ENCODE measurements at regions of chr5 and their contacts with region 1.

Region 1: GRCh38 chr5:132866342-132867045 is at the starts of genes GDF9 and UQCRQ:
- DNase-seq: peak; percentile 79 to 100 (median 89)
- ATAC-seq: peak; percentile 93
- H3K4me3 ChIP-seq: peak within 1 kb of the TSS; percentile 88 to 92
- H3K4me3 Mint-ChIP-seq: peak within 1 kb of the TSS; percentile 100
- H3K27ac ChIP-seq: peak within 1 kb of the TSS; percentile 96 to 97
- H3K27ac Mint-ChIP-seq: peak within 1 kb of the TSS; percentile 100
- H3K4me1 ChIP-seq: peaks cover 14% of the 10 kb centered on the region
- H3K4me1 Mint-ChIP-seq: peaks cover 26% of the 10 kb centered on the region
- H3K27me3 ChIP-seq: no peaks in the 10 kb centered on the region
- H3K27me3 Mint-ChIP-seq: no peaks in the 10 kb centered on the region
- CTCF ChIP-seq: no peak
- total RNA-seq, gene GDF9: 0.43 to 0.72 TPM
- total RNA-seq, gene UQCRQ: 124 to 128 TPM

Region 2: DNA sequence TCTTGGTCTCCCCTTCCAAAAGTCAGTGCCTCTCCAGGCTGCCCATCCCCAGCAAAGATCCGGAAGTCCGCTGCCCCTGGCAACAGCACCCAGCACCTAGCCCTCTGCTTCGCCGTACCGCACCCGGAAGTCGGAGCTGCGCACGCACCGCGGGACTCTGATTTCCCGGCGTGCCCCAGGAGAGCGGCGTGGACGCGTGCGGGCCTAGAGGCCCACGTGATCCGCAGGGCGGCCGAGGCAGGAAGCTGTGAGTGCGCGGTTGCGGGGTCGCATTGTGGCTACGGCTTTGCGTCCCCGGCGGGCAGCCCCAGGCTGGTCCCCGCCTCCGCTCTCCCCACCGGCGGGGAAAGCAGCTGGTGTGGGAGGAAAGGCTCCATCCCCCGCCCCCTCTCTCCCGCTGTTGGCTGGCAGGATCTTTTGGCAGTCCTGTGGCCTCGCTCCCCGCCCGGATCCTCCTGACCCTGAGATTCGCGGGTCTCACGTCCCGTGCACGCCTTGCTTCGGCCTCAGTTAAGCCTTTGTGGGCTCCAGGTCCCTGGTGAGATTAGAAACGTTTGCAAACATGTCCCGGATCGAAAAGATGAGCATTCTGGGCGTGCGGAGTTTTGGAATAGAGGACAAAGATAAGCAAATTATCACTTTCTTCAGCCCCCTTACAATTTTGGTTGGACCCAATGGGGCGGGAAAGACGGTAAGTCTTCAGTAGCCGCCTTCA is 309.6 kb before region 1 on chr5 and contains the start of gene RAD50:
- CTCF ChIA-PET with region 1: no interaction called
- POLR2A ChIA-PET with region 1: no interaction called
- intact Hi-C with region 1: loop called (anchors 1 to 5 kb)
- DNase-seq: peak; percentile 83 to 96 (median 91)
- ATAC-seq: peak; percentile 95
- H3K4me3 ChIP-seq: peak within 1 kb of the TSS; percentile 62 to 97
- H3K4me3 Mint-ChIP-seq: peak within 1 kb of the TSS; percentile 98
- H3K27ac ChIP-seq: peak within 1 kb of the TSS; percentile 68 to 91
- H3K27ac Mint-ChIP-seq: peak within 1 kb of the TSS; percentile 98
- H3K4me1 ChIP-seq: peaks cover 21% of the 10 kb centered on the region
- H3K4me1 Mint-ChIP-seq: peaks cover 28% of the 10 kb centered on the region
- H3K27me3 ChIP-seq: no peaks in the 10 kb centered on the region
- H3K27me3 Mint-ChIP-seq: no peaks in the 10 kb centered on the region
- CTCF ChIP-seq: no peak
- total RNA-seq, gene RAD50: 8.0 to 8.7 TPM

Region 3: GRCh38 chr5:132829742-132830435 is 36.6 kb before region 1 on chr5:
- CTCF ChIA-PET with region 1: interaction called, 11 read pairs
- POLR2A ChIA-PET with region 1: no interaction called
- intact Hi-C with region 1: loop called in 1 of 2 experiments (anchors 5 kb)
- DNase-seq: peak; percentile 43 to 84 (median 71)
- ATAC-seq: peak; percentile 89
- H3K4me3 ChIP-seq: peak overlapping the region; percentile 48 to 69
- H3K4me3 Mint-ChIP-seq: peak overlapping the region; percentile 85
- H3K27ac ChIP-seq: no peak overlapping the region
- H3K27ac Mint-ChIP-seq: no peak overlapping the region
- H3K4me1 ChIP-seq: peaks cover 16% of the 10 kb centered on the region
- H3K4me1 Mint-ChIP-seq: peaks cover 3% of the 10 kb centered on the region
- H3K27me3 ChIP-seq: peaks cover 20 to 21% of the 10 kb centered on the region in 2 experiments
- H3K27me3 Mint-ChIP-seq: peaks cover 47% of the 10 kb centered on the region
- CTCF ChIP-seq: peak; percentile 84

Region 4: DNA sequence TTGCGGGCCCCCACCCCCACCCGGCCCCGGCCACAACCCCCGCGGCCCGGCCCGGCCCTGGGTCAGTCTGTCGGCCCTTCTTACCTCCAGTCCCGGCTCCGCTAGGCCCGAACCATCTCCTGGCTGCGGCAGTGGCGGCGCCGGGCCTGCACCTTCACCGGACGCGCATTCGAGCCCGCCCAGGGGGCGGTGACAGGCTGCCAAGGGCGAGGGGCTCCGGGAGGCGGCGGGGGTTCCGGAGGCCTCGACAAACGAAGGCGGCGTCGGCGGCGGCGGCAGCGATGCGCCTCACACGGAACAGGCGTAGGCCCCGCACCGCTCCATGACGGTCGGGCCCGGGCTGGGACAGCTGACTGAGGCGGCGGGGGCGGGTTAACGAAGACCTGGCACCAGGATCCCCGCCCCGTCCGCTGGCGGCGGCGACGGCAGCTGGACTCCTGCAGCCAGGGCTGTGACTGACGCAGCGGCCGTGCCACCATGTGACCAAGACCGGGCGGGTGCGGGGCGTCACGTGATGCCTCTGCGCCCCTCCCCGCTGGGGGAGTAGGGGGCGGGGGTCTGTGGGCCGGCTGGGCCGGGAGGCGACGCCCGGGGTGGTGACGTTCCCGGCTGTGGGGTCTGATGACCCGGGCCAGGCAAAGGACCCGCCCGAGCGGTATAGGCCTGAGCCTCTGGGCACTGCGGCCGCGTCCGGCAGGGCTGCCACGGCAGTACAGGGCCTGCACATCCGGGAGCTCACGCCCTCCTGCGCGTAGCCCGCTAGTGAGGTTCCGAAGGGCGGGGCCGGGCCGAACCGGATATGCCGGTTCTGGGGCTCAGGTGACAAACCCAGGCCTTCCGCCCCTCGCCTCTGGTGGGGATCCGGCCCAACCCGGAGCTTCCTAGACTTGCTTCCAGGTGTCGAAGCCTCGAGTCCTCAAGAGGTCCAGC is 96.9 kb after region 1 on chr5 and contains the start of gene AFF4:
- CTCF ChIA-PET with region 1: no interaction called
- POLR2A ChIA-PET with region 1: interaction called, 5 read pairs
- intact Hi-C with region 1: loop called (anchors 1 to 2 kb)
- DNase-seq: peak; percentile 69 to 93 (median 84)
- ATAC-seq: peak; percentile 75
- H3K4me3 ChIP-seq: peak within 1 kb of the TSS; percentile 52 to 71
- H3K4me3 Mint-ChIP-seq: peak within 1 kb of the TSS; percentile 95
- H3K27ac ChIP-seq: peak within 1 kb of the TSS; percentile 84 to 92
- H3K27ac Mint-ChIP-seq: peak within 1 kb of the TSS; percentile 99
- H3K4me1 ChIP-seq: peaks cover 35% of the 10 kb centered on the region
- H3K4me1 Mint-ChIP-seq: peaks cover 43% of the 10 kb centered on the region
- H3K27me3 ChIP-seq: no peaks in the 10 kb centered on the region
- H3K27me3 Mint-ChIP-seq: no peaks in the 10 kb centered on the region
- CTCF ChIP-seq: no peak
- total RNA-seq, gene AFF4: 98.0 to 104 TPM

Region 5: DNA sequence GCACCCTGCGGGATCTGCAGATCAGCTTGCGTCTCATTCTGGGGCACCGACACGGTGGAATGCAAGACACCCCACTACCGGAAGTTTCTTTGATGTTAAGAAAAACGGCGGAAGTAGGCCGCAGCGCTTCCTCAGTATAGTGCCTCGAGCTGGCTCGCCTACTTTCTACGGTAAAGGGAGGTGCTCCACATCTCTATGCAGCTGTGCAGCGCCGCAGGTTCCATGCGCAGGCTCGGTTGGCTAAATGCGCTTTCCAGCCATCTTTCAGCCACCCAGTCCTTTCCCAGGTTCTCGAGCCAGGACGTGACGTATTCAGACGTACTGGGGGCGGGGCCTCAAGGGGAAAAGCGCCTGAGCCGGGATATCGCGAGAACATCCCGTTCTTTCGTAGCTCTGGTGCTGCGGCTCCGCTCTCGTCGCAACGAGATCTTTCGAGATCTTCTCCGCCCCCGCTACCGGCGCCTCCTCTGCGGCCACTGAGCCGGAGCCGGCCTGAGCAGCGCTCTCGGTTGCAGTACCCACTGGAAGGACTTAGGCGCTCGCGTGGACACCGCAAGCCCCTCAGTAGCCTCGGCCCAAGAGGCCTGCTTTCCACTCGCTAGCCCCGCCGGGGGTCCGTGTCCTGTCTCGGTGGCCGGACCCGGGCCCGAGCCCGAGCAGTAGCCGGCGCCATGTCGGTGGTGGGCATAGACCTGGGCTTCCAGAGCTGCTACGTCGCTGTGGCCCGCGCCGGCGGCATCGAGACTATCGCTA is 185.3 kb after region 1 on chr5 and contains the start of gene HSPA4:
- CTCF ChIA-PET with region 1: no interaction called
- POLR2A ChIA-PET with region 1: interaction called, 3 read pairs
- intact Hi-C with region 1: loop called (anchors 1 kb)
- DNase-seq: peak; percentile 93 to 100 (median 97)
- ATAC-seq: peak; percentile 89
- H3K4me3 ChIP-seq: peak within 1 kb of the TSS; percentile 88 to 100
- H3K4me3 Mint-ChIP-seq: peak within 1 kb of the TSS; percentile 99
- H3K27ac ChIP-seq: peak within 1 kb of the TSS; percentile 97
- H3K27ac Mint-ChIP-seq: peak within 1 kb of the TSS; percentile 100
- H3K4me1 ChIP-seq: peaks cover 46% of the 10 kb centered on the region
- H3K4me1 Mint-ChIP-seq: peaks cover 56% of the 10 kb centered on the region
- H3K27me3 ChIP-seq: no peaks in the 10 kb centered on the region
- H3K27me3 Mint-ChIP-seq: no peaks in the 10 kb centered on the region
- CTCF ChIP-seq: no peak
- total RNA-seq, gene HSPA4: 24.4 to 29.7 TPM

Region 6: GRCh38 chr5:134365604-134366003 is 1499.1 kb after region 1 on chr5:
- CTCF ChIA-PET with region 1: no interaction called
- POLR2A ChIA-PET with region 1: no interaction called
- intact Hi-C with region 1: loop called in 1 of 2 experiments (anchors 10 kb)
- DNase-seq: no peak
- ATAC-seq: no peak
- H3K4me3 ChIP-seq: no peak overlapping the region
- H3K4me3 Mint-ChIP-seq: peak overlapping the region; percentile 26
- H3K27ac ChIP-seq: no peak overlapping the region
- H3K27ac Mint-ChIP-seq: no peak overlapping the region
- H3K4me1 ChIP-seq: peaks cover 21% of the 10 kb centered on the region
- H3K4me1 Mint-ChIP-seq: peaks cover 31% of the 10 kb centered on the region
- H3K27me3 ChIP-seq: no peaks in the 10 kb centered on the region
- H3K27me3 Mint-ChIP-seq: no peaks in the 10 kb centered on the region
- CTCF ChIP-seq: no peak

Region 7: GRCh38 chr5:134738133-134738962 is 1871.9 kb after region 1 on chr5 and contains the start of gene CAMLG:
- CTCF ChIA-PET with region 1: no interaction called
- POLR2A ChIA-PET with region 1: no interaction called
- intact Hi-C with region 1: loop called in 1 of 2 experiments (anchors 10 kb)
- DNase-seq: peak; percentile 94 to 99 (median 97)
- ATAC-seq: peak; percentile 97
- H3K4me3 ChIP-seq: peak within 1 kb of the TSS; percentile 89 to 91
- H3K4me3 Mint-ChIP-seq: peak within 1 kb of the TSS; percentile 86
- H3K27ac ChIP-seq: peak within 1 kb of the TSS; percentile 79 to 92
- H3K27ac Mint-ChIP-seq: peak within 1 kb of the TSS; percentile 95
- H3K4me1 ChIP-seq: peaks cover 20% of the 10 kb centered on the region
- H3K4me1 Mint-ChIP-seq: peaks cover 35% of the 10 kb centered on the region
- H3K27me3 ChIP-seq: no peaks in the 10 kb centered on the region
- H3K27me3 Mint-ChIP-seq: no peaks in the 10 kb centered on the region
- CTCF ChIP-seq: peak; percentile 81
- total RNA-seq, gene CAMLG: 52.3 to 56.2 TPM